PC-3 (cell line): ENCODE measurements at regions of chr3 and their contacts with region 1.

Region 1: GRCh38 chr3:189937307-189938124 is 183.2 kb downstream of the P3H2 start:
- DNase-seq: peak; percentile 99
- ATAC-seq: peak; percentile 88
- H3K4me3 ChIP-seq: no peak overlapping the region
- H3K27ac ChIP-seq: peak overlapping the region; percentile 83
- H3K4me1 ChIP-seq: peaks cover 41% of the 10 kb centered on the region
- H3K27me3 ChIP-seq: no peaks in the 10 kb centered on the region
- CTCF ChIP-seq: no peak

Region 2: DNA sequence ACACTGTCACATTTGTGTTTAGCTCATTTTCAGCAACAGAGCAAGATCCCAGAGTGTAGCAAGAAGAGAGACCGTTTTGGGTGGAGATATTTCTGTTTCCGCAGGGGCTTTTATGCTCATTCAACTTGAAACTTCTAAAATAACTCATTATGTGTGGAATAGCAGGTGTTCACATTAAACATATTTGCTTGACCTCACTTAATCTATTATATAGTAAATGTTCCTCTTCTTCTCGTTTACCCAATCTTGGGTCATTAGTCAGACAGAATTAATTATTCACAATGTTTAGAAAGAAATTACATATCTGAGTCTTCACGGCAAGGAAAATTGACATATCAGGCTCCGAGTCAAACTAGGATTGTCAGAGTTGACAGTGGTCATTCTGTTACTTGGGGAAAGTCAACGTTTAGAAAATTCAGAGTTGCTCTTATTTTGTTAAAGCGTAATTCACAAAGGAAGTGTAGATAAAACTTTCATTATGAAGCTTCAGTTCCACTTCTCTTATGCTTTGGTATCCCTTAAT is 542.9 kb before region 1 on chr3:
- CTCF ChIA-PET with region 1: no interaction called
- POLR2A ChIA-PET with region 1: no interaction called
- intact Hi-C with region 1: loop called (anchors 5 kb)
- DNase-seq: no peak
- ATAC-seq: no peak
- H3K4me3 ChIP-seq: no peak overlapping the region
- H3K27ac ChIP-seq: no peak overlapping the region
- H3K4me1 ChIP-seq: peaks cover 20% of the 10 kb centered on the region
- H3K27me3 ChIP-seq: no peaks in the 10 kb centered on the region
- CTCF ChIP-seq: no peak

Region 3: GRCh38 chr3:189685854-189686253 is 251.7 kb before region 1 on chr3:
- CTCF ChIA-PET with region 1: no interaction called
- POLR2A ChIA-PET with region 1: no interaction called
- intact Hi-C with region 1: loop called (anchors 1 kb)
- DNase-seq: peak; percentile 97
- ATAC-seq: peak; percentile 97
- H3K4me3 ChIP-seq: peak overlapping the region; percentile 32; the same call in 1 of the 2 replicates
- H3K27ac ChIP-seq: peak overlapping the region; percentile 96
- H3K4me1 ChIP-seq: peaks cover 44% of the 10 kb centered on the region
- H3K27me3 ChIP-seq: no peaks in the 10 kb centered on the region
- CTCF ChIP-seq: no peak

Region 4: GRCh38 chr3:189824629-189825312 is 112.7 kb before region 1 on chr3:
- CTCF ChIA-PET with region 1: no interaction called
- POLR2A ChIA-PET with region 1: no interaction called
- intact Hi-C with region 1: loop called (anchors 1 kb)
- DNase-seq: peak; percentile 91
- ATAC-seq: peak; percentile 81
- H3K4me3 ChIP-seq: no peak overlapping the region
- H3K27ac ChIP-seq: peak overlapping the region; percentile 48
- H3K4me1 ChIP-seq: peaks cover 36% of the 10 kb centered on the region
- H3K27me3 ChIP-seq: no peaks in the 10 kb centered on the region
- CTCF ChIP-seq: no peak

Region 5: GRCh38 chr3:189902230-189903186 is 35.0 kb before region 1 on chr3:
- CTCF ChIA-PET with region 1: no interaction called
- POLR2A ChIA-PET with region 1: no interaction called
- intact Hi-C with region 1: no loop called
- DNase-seq: no peak
- ATAC-seq: no peak
- H3K4me3 ChIP-seq: no peak overlapping the region
- H3K27ac ChIP-seq: no peak overlapping the region
- H3K4me1 ChIP-seq: peaks cover 6% of the 10 kb centered on the region; the same call in 1 of the 2 replicates
- H3K27me3 ChIP-seq: no peaks in the 10 kb centered on the region
- CTCF ChIP-seq: no peak

Region 6: GRCh38 chr3:190038050-190038933 is 100.8 kb after region 1 on chr3:
- CTCF ChIA-PET with region 1: no interaction called
- POLR2A ChIA-PET with region 1: no interaction called
- intact Hi-C with region 1: no loop called
- DNase-seq: peak; percentile 72
- ATAC-seq: peak; percentile 76
- H3K4me3 ChIP-seq: no peak overlapping the region
- H3K27ac ChIP-seq: no peak overlapping the region
- H3K4me1 ChIP-seq: peaks cover 9% of the 10 kb centered on the region; the same call in 1 of the 2 replicates
- H3K27me3 ChIP-seq: no peaks in the 10 kb centered on the region
- CTCF ChIP-seq: no peak